MCF 10A (cell line): ENCODE measurements at regions of chr6 and their contacts with region 1.

Region 1: GRCh38 chr6:2103644-2104523 is 141.5 kb downstream of the GMDS start:
- DNase-seq: peak; percentile 66
- H3K4me3 Mint-ChIP-seq: peak overlapping the region; percentile 70
- H3K27ac Mint-ChIP-seq: peak overlapping the region; percentile 30
- H3K4me1 Mint-ChIP-seq: peaks cover 22% of the 10 kb centered on the region
- H3K27me3 Mint-ChIP-seq: no peaks in the 10 kb centered on the region
- CTCF ChIP-seq: peak; percentile 70

Region 2: DNA sequence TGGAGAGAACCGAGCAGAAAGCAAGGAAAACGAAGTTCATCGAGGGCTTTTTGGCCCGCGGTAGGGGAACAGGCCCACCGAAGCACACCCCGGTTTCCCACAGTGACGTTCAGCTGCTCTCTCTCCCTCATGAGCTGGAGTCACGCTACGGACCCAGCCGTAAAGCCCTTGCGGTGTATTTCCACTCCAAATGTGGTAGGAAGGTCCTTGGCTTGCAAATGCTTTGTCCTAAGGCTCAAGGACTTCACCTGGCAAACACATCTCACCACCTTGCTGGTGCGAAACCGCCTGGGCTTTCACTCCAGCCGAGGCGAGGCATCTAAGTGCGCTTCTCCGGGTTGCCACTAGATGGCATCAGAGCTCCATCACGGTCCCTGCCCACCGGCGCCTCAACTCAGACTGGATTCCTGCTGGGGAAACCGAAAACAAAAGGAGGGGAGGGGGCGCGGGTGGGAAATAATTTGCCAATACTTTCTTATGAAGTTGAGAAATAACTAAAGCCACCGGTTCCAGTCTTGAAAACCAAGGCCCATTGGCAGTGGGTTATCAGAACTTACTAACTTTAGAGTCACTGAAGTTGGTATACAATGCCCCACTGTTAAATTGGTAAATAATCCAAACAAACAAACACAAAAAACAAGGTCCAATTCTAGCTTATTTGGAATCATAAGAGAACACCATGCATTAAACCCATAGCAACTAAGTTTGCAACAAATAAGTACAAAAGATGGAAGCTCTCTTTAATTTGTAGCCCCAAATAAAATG is 507.6 kb before region 1 on chr6:
- CTCF ChIA-PET with region 1: interaction called, 24 read pairs
- POLR2A ChIA-PET with region 1: interaction called, 14 read pairs
- intact Hi-C with region 1: no loop called
- DNase-seq: peak; percentile 55
- H3K4me3 Mint-ChIP-seq: no peak overlapping the region
- H3K27ac Mint-ChIP-seq: no peak overlapping the region
- H3K4me1 Mint-ChIP-seq: peaks cover 28% of the 10 kb centered on the region
- H3K27me3 Mint-ChIP-seq: peaks cover 21% of the 10 kb centered on the region
- CTCF ChIP-seq: peak; percentile 93

Region 3: DNA sequence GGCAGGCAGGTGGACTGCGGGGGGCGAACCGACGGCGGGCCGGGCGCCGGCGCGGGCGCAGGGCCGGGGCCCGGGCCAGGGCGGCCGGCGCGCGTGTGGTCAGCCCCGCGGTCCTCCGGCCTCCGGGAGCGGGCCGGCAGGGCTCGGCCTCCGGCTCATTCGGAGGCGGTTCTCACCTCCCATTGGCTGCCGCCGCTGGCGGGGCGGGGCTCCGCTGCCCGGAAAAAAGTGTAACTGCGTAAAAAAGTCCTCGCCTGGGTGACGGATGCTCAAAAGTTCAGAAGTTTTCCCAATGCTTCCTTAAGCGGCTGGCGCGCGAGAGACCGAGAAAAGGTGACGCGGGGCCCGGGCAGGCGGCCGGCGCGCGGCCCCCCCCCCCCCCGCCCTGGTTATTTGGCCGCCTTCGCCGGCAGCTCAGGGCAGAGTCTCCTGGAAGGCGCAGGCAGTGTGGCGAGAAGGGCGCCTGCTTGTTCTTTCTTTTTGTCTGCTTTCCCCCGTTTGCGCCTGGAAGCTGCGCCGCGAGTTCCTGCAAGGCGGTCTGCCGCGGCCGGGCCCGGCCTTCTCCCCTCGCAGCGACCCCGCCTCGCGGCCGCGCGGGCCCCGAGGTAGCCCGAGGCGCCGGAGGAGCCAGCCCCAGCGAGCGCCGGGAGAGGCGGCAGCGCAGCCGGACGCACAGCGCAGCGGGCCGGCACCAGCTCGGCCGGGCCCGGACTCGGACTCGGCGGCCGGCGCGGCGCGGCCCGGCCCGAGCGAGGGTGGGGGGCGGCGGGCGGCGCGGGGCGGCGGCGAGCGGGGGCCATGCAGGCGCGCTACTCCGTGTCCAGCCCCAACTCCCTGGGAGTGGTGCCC is 494.0 kb before region 1 on chr6 and contains the start of gene FOXC1:
- CTCF ChIA-PET with region 1: interaction called, 25 read pairs
- POLR2A ChIA-PET with region 1: interaction called, 68 read pairs
- intact Hi-C with region 1: loop called (anchors 1 kb)
- DNase-seq: peak; percentile 94
- H3K4me3 Mint-ChIP-seq: peak within 1 kb of the TSS; percentile 92
- H3K27ac Mint-ChIP-seq: peak within 1 kb of the TSS; percentile 84
- H3K4me1 Mint-ChIP-seq: no peaks in the 10 kb centered on the region
- H3K27me3 Mint-ChIP-seq: no peaks in the 10 kb centered on the region
- CTCF ChIP-seq: no peak
- total RNA-seq, gene FOXC1: 16.7 and 16.8 TPM in 2 replicates

Region 4: DNA sequence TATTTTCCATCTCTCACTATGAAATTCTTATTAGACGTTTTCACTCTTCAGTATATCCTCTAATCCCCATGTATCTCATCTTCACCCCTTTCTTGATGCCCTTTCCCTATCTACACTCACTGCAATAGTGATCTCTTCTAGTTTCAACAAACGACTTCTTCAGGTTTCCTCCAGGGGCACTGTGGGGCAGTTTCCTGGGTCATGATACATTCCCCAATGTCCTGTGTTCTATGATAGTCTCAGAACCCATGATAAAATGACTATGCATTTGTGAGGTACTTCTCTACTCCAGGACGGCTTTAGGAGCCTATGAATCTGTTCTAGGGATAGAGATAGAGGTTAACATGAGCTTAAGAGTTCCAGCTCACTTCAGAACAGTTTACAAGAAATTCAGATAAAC is 310.9 kb before region 1 on chr6:
- CTCF ChIA-PET with region 1: interaction called, 3 read pairs
- POLR2A ChIA-PET with region 1: interaction called, 3 read pairs
- intact Hi-C with region 1: loop called (anchors 5 kb)
- DNase-seq: peak; percentile 62
- H3K4me3 Mint-ChIP-seq: no peak overlapping the region
- H3K27ac Mint-ChIP-seq: no peak overlapping the region
- H3K4me1 Mint-ChIP-seq: peaks cover 3% of the 10 kb centered on the region
- H3K27me3 Mint-ChIP-seq: no peaks in the 10 kb centered on the region
- CTCF ChIP-seq: peak; percentile 33

Region 5: GRCh38 chr6:1952726-1953360 is 151.0 kb before region 1 on chr6:
- CTCF ChIA-PET with region 1: interaction called, 3 read pairs
- POLR2A ChIA-PET with region 1: no interaction called
- intact Hi-C with region 1: loop called (anchors 2 kb)
- DNase-seq: peak; percentile 98
- H3K4me3 Mint-ChIP-seq: peak overlapping the region; percentile 68
- H3K27ac Mint-ChIP-seq: peak overlapping the region; percentile 100
- H3K4me1 Mint-ChIP-seq: peaks cover 18% of the 10 kb centered on the region
- H3K27me3 Mint-ChIP-seq: no peaks in the 10 kb centered on the region
- CTCF ChIP-seq: no peak

Region 6: DNA sequence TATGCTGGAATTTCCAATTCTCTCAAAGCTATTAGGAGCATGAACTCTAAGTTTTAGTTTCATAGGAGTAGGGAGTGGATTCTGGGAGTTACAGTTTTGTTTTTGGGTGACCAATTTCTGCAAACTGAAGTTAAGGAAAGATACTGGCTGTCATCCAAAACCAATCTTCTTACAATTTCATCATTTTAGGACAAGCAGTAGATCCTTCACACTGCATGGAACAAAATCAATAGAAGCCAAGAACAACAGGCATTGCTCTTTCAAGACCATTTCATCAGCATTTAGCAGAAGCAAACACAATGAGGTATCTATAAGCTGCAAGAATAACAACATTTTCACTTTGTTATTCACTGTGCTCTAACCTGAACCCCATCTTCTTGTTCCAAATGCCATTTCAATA is 31.4 kb before region 1 on chr6:
- CTCF ChIA-PET with region 1: no interaction called
- POLR2A ChIA-PET with region 1: no interaction called
- intact Hi-C with region 1: no loop called
- DNase-seq: peak; percentile 17
- H3K4me3 Mint-ChIP-seq: no peak overlapping the region
- H3K27ac Mint-ChIP-seq: no peak overlapping the region
- H3K4me1 Mint-ChIP-seq: peaks cover 14% of the 10 kb centered on the region
- H3K27me3 Mint-ChIP-seq: no peaks in the 10 kb centered on the region
- CTCF ChIP-seq: no peak

Region 7: GRCh38 chr6:2353412-2354137 is 249.7 kb after region 1 on chr6:
- CTCF ChIA-PET with region 1: interaction called, 6 read pairs
- POLR2A ChIA-PET with region 1: interaction called, 3 read pairs
- intact Hi-C with region 1: loop called (anchors 2 kb)
- DNase-seq: peak; percentile 82
- H3K4me3 Mint-ChIP-seq: no peak overlapping the region
- H3K27ac Mint-ChIP-seq: no peak overlapping the region
- H3K4me1 Mint-ChIP-seq: peaks cover 9% of the 10 kb centered on the region
- H3K27me3 Mint-ChIP-seq: no peaks in the 10 kb centered on the region
- CTCF ChIP-seq: peak; percentile 85

Region 8: DNA sequence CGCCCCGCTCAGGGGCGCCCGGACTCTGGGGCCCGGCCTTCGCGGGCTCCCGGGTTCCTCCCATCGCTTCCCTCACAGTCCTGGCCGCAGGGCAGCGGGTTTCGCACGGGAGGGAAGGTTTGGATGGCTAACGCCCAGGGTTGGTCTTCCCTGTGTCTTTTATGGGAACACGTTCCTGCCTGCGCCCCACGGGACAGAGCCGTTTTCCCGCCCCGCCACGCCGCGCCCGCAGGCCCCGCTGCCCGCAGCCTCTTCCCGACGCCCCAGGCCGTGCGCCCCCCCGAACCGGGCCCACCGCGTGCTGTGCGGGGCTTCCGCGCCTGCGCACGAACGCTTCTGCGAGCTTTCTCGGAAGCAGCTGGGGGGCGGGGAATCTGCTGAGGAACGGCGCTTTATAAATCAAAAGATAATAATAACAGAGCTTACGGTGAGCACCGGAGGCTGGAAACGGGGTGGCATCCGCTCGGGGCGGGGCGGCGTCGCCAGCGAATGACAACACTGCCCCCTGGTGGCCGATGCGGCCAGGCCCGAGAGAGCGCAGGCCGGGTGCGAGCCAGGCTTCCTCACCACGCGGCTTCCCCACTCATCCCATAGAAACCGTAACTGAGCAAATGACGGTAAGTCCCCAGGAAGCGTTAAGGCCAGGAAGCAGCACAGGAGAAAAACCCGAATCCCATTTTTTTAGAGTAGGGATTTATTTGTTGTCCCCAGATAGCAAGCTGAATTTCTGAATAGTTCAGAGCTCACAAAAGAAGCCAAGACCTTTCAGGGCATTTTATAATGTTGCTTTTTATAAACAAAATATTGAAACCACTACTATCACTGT is 530.5 kb after region 1 on chr6:
- CTCF ChIA-PET with region 1: interaction called, 9 read pairs
- POLR2A ChIA-PET with region 1: interaction called, 3 read pairs
- intact Hi-C with region 1: loop called (anchors 2 kb)
- DNase-seq: peak; percentile 87
- H3K4me3 Mint-ChIP-seq: peak overlapping the region; percentile 67
- H3K27ac Mint-ChIP-seq: peak overlapping the region; percentile 80
- H3K4me1 Mint-ChIP-seq: peaks cover 40% of the 10 kb centered on the region
- H3K27me3 Mint-ChIP-seq: no peaks in the 10 kb centered on the region
- CTCF ChIP-seq: peak; percentile 95